ENCODE measurements at regions of chr14 and their contacts with region 1.

Region 1: DNA sequence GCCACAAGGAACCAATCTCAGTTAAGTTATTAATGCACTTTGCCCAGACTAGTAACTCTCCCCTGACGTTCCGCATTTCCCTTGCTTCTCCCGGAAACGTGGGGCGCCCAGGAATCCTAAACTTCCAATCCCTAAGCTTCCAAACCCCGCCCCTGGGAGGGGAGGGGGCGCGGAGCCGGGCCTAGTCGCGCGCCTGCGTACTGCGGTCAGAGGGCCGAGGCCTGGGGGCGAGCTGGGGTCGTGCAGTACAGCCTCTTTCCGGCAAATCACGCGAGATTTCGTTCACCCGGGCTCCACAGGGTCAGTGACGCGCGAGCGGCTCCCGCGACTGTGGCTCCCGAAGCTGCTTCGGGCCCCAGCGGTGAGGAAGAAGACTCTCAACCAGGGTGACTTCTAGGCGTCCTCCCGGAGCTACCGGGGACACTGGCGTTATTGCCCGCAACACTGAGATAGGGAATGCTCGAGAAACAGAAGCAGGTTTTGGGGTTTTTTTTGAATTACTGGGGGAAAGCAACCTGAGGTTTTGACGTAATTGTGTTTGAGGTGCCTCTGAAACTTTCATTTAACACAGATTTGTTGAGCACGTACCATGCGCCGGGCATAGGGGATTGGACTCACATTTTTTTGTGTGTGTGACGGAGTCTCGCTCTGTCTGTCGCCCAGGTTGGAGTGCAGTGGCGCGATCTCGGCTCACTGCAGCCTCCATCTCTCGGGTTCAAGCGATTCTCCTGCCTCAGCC is at the start of gene PTGR2:
- DNase-seq: peak; percentile 96
- total RNA-seq, gene PTGR2: 36.7 TPM

Region 2: DNA sequence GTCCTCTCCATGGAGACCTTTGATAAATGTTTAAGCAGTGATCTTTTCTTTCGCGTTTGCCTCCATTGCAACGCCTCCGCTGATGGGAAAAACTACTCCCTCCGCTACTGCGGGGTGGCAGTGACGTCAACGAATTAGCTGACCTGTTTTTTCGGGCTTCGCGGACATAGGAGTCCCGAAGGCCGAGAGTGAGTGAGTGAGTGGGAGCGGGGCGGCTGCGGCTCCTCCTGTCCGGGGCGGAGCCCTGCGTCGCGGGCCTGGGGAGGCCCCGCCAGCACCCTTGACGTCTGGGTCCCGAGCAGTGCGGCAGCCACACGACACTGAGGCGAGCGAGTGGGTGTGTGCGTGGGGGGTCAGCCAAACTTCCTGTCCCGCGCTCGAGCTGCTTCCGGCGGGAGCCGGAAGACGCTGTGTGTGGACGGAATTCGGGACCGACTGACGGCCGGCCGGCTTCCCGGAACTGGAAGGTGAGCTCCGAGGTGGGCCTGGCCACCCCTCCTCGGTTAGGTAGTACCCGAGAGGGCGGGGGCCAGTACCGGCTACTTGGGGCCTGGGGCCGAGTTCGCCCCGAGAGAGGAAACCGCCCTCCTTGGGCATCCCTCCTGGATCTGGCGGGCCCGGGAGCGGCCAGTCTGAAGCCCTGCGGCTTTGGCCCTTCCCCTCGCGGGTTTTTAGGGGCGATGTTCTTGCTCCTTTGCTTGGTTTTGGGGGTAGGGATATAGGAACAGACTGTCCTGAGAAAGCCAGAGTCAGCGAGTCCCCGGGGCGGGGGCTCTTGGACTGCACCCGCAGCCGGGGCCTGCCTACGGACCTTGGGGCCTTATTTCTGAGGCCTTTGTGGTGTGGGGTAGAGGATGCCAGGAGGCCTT is 34.9 kb after region 1 on chr14 and contains the start of gene ZNF410:
- intact Hi-C with region 1: loop called (anchors 5 kb)
- DNase-seq: peak; percentile 97
- total RNA-seq, gene ZNF410: 19.9 TPM